OCI-LY7 (cell line): ENCODE measurements at regions of chr7 and their contacts with region 1.

Region 1: GRCh38 chr7:48109848-48110663 is 21.0 kb downstream of the UPP1 start:
- DNase-seq: peak; percentile 81
- H3K4me3 ChIP-seq: no peak overlapping the region
- H3K27ac ChIP-seq: no peak overlapping the region
- H3K4me1 ChIP-seq: peaks cover 5% of the 10 kb centered on the region
- CTCF ChIP-seq: peak; percentile 99

Region 2: DNA sequence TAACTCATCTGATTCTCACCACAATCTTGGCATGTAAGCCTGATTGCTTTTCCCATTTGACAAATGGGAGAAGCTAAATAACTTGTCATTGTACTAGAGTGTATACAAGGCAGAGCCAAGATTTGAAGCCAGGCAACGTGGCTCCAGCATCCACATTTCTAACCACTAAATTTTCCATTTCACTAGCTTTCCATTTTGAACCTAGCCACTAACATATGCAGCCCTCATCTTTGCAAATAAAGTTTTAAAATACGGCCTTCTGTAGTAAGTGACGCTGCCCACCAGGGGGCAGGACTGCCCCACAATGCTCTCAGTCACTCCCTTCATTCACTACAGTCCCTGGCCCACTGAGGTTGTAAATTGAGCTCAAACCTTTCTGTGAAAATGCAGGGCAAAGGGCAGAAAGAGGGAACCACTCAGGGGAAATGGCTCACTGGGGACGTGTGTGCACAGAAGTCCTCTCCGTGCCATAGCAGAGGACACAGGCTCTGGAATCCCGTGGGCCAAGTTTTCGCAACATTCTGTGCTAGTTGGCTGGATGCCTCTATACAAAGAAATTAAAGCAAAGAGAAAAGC is 843.8 kb before region 1 on chr7:
- CTCF ChIA-PET with region 1: no interaction called
- POLR2A ChIA-PET with region 1: no interaction called
- intact Hi-C with region 1: loop called (anchors 5 kb)
- DNase-seq: peak; percentile 67
- H3K4me3 ChIP-seq: no peak overlapping the region
- H3K27ac ChIP-seq: no peak overlapping the region
- H3K4me1 ChIP-seq: no peaks in the 10 kb centered on the region
- CTCF ChIP-seq: peak; percentile 98

Region 3: DNA sequence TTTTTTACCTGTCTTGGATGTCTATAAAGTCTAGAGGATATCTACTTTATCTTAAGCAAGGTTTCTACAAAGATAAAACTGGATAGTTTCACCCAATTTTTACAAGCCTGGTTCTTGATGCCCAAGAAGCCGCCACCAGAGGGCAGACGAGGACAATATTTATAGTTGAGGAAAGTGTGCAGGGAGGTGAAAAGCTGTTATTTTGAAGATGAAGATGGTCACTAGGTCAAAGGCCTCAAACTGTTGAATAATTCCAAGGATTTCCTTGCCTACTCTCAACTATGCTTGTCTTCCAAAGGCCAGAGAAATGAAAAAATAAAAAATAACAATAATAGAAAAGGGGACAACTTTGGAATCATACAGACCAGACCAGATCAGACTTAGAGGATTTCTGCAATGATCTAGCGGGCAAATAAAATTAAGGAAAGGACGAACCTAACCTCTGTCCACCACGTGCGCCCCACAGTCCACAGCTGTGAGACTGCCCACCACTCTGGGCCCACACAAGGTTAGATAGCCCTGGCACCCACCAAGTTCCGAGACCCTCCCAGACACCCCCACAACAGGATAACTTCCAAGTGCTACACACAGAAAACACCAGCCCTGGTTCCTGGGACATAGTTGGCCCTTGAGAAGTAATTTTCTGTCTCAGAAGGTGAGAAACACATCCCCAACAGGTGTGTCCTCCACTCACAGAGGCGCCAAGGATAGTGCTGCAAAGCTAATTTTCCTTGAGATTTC is 164.6 kb before region 1 on chr7:
- CTCF ChIA-PET with region 1: interaction called, 9 read pairs
- POLR2A ChIA-PET with region 1: no interaction called
- intact Hi-C with region 1: loop called (anchors 1 kb)
- DNase-seq: peak; percentile 81
- H3K4me3 ChIP-seq: no peak overlapping the region
- H3K27ac ChIP-seq: no peak overlapping the region
- H3K4me1 ChIP-seq: no peaks in the 10 kb centered on the region
- CTCF ChIP-seq: peak; percentile 97

Region 4: DNA sequence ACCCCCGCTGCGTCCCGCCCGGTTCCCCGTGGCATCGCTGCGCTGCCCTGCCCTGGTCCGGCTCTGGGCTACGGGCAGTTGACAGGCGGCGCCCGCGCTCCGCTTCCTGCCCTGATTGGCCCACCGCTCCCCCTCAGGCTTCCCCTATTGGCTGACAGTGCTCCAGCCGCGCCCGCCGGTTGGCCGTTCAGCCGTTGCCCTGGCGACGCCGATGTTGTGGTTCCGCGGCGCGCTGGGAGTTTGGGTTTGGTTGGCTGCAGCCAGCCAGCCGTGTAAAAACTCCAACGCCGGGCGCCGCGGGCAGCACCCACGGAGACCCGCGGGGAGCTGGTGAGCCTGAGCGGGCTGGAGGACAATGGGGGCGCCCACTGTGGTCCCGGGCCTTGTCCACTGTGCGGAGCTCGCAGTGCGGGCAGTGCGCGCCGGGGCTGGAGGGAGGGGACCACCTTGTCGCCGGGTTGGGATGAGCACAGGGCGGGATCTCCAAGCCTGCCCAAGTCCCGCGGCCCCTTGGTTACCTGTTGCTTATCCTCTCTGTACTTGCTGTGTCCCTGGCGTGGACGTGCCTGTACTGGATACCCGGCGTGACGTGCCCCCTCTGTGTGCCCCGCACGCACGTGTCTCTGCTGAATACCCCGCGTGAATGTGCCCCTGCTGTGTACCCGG is 74.6 kb before region 1 on chr7 and contains the start of gene C7orf57:
- CTCF ChIA-PET with region 1: no interaction called
- POLR2A ChIA-PET with region 1: interaction called, 3 read pairs
- intact Hi-C with region 1: loop called (anchors 5 kb)
- DNase-seq: peak; percentile 84
- H3K4me3 ChIP-seq: peak within 1 kb of the TSS; percentile 73
- H3K27ac ChIP-seq: no peak within 1 kb of the TSS
- H3K4me1 ChIP-seq: no peaks in the 10 kb centered on the region
- CTCF ChIP-seq: peak; percentile 52; the same call in 1 of the 2 replicates
- total RNA-seq, gene C7orf57: 0.25 and 0.59 TPM in 2 replicates

Region 5: GRCh38 chr7:48168159-48168558 is 58.1 kb after region 1 on chr7:
- CTCF ChIA-PET with region 1: no interaction called
- POLR2A ChIA-PET with region 1: no interaction called
- intact Hi-C with region 1: no loop called
- DNase-seq: peak; percentile 7
- H3K4me3 ChIP-seq: no peak overlapping the region
- H3K27ac ChIP-seq: no peak overlapping the region
- H3K4me1 ChIP-seq: no peaks in the 10 kb centered on the region
- CTCF ChIP-seq: peak; percentile 46